ENCODE measurements at regions of chr19 and their contacts with region 1.

Region 1: DNA sequence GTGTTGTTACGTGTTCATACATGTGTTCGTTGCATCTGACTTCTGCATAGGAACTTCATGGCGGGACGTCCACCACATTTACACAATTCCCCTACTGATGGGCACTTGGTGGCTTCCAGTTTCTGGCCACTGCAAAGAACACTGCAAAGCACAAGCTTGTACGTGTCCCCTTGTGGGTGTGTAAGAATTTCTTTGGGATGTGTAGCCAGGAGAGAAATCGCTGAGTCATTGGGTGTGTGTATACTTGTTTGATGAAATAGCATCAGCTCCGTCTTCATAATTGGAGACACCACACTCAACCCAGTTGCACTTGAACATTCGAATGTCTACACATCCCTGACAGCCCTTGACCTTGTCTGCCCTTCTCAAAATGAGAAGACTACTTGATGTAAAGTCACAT is 19.2 kb downstream of the KLK5 start:
- DNase-seq: no peak
- ATAC-seq: no peak
- H3K4me3 ChIP-seq: no peak overlapping the region
- H3K27ac ChIP-seq: no peak overlapping the region
- H3K4me1 ChIP-seq: no peaks in the 10 kb centered on the region
- H3K27me3 ChIP-seq: peaks cover 0 to 38% (median 8%) of the 10 kb centered on the region in 9 donors
- CTCF ChIP-seq: no peak
- POLR2A ChIP-seq: no peak

Region 2: GRCh38 chr19:51097166-51097738 is 163.6 kb after region 1 on chr19:
- intact Hi-C with region 1: loop called in 9 of 10 experiments (anchors 2 to 10 kb)
- DNase-seq: peak; percentile 45 to 88 (median 63)
- ATAC-seq: peak in 3 of 4 donors; percentile 44 to 62 (median 52)
- H3K4me3 ChIP-seq: no peak overlapping the region
- H3K27ac ChIP-seq: no peak overlapping the region
- H3K4me1 ChIP-seq: peaks cover 0 to 27% (median 3%) of the 10 kb centered on the region in 12 donors
- H3K27me3 ChIP-seq: no peaks in the 10 kb centered on the region
- CTCF ChIP-seq: peak; percentile 42 to 66 (median 56)
- POLR2A ChIP-seq: no peak

Region 3: DNA sequence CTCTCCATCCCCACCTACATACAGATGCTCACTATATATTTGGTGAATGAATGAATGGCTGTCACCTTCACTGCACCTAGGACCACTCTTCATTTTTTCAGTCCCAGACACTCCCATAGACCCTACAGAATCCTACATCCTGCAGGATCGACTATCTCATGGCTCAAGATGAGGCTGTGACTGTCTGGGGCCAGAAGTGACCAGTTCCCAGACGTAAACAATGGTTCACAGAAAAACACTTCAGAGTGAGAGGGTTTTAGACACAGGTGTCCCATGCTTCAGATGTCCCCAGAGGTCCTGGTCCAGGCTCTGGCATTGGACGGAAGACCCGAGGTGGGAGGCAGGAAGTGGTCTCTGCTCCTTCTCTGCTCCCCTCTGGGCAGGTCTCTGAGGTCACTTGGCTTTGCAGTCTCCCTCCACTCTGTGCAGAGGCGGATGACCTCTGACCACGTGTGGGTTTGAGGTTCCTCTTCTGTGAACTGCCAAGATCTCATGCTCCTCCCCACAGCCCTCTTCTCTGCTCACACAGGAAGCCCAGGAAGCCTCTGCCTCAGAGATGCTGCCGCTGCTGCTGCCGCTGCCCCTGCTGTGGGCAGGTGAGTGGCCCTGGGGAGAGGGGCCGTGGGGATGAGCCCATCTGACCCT is 233.3 kb after region 1 on chr19:
- intact Hi-C with region 1: loop called in 1 of 10 experiments (anchors 5 kb)
- DNase-seq: peak in 2 of 5 donors; percentile 41 to 42
- ATAC-seq: peak in 3 of 4 donors; percentile 56 to 78 (median 65)
- H3K4me3 ChIP-seq: peak overlapping the region in 1 of 12 donors; percentile 23
- H3K27ac ChIP-seq: no peak overlapping the region
- H3K4me1 ChIP-seq: peaks cover 0 to 21% (median 0%) of the 10 kb centered on the region in 12 donors
- H3K27me3 ChIP-seq: peaks cover 0 to 17% (median 2%) of the 10 kb centered on the region in 9 donors
- CTCF ChIP-seq: no peak
- POLR2A ChIP-seq: no peak